H1 (cell line): ENCODE measurements at regions of chr4 and their contacts with region 1.

Region 1: DNA sequence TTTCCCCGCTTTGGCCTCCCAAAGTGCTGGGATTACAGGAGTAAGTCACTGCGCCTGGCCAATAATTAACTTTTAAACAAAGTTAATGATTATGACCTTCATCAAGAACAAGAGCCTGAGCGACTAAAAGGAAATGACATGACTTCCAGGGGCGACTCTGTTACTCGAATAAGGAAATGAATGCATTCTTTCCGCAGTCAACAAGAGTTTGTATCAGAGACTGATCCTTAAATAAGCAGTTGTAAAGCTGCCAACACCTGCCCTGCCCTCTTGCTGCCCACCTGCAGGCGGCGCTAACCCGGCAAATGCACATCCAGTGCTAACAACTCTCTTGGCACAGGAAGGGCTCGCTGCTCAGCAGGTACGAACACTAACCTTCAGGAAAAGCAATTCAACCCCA is 27.3 kb downstream of the WDR1 start:
- DNase-seq: peak in 1 of 2 experiments; percentile 19
- H3K4me3 ChIP-seq: no peak overlapping the region
- H3K27ac ChIP-seq: no peak overlapping the region
- H3K4me1 ChIP-seq: peaks cover 0 to 16% (median 9%) of the 10 kb centered on the region in 4 experiments; a peak in 5 of 7 replicates
- H3K27me3 ChIP-seq: no peaks in the 10 kb centered on the region
- CTCF ChIP-seq: peak in 2 of 3 experiments; percentile 60 to 82; a peak in 3 of 4 replicates
- EP300 ChIP-seq: no peak
- POLR2A ChIP-seq: no peak
- RAD21 ChIP-seq: peak in 1 of 2 experiments; percentile 53; a peak in 2 of 4 replicates

Region 2: DNA sequence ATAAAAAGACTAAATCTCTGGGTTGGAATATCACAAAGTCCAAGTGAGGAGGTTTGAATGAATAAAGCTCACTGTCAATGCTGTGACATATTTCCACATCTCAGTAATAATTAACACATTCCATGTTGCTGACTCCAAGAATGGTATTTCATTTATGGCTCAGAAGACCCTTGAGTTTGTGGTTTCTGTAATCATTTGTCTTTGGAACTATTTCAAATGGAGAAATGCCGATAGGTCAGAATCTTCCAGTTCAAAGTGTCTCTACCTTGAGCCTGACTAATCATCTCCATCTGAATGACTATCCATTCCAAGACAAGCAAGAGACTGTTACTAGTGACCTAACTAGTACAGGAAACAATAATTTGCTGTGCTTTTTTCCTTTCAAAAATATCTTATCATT is 43.9 kb before region 1 on chr4:
- CTCF ChIA-PET with region 1: no interaction called
- POLR2A ChIA-PET with region 1: no interaction called
- DNase-seq: no peak
- H3K4me3 ChIP-seq: no peak overlapping the region
- H3K27ac ChIP-seq: no peak overlapping the region
- H3K4me1 ChIP-seq: peaks cover 2 to 7% (median 5%) of the 10 kb centered on the region in 4 experiments; a peak in 5 of 7 replicates
- H3K27me3 ChIP-seq: no peaks in the 10 kb centered on the region
- CTCF ChIP-seq: no peak
- EP300 ChIP-seq: no peak
- POLR2A ChIP-seq: no peak
- RAD21 ChIP-seq: no peak

Region 3: GRCh38 chr4:10063544-10064300 is 25.6 kb before region 1 on chr4:
- CTCF ChIA-PET with region 1: interaction called, 12 read pairs
- POLR2A ChIA-PET with region 1: interaction called, 9 read pairs
- DNase-seq: peak; percentile 62 to 71
- H3K4me3 ChIP-seq: no peak overlapping the region
- H3K27ac ChIP-seq: no peak overlapping the region
- H3K4me1 ChIP-seq: peaks cover 0 to 10% (median 3%) of the 10 kb centered on the region in 4 experiments; a peak in 4 of 7 replicates
- H3K27me3 ChIP-seq: no peaks in the 10 kb centered on the region
- CTCF ChIP-seq: peak; percentile 52 to 87 (median 69)
- EP300 ChIP-seq: peak in 1 of 2 experiments; percentile 63; a peak in 1 of 3 replicates
- POLR2A ChIP-seq: no peak
- RAD21 ChIP-seq: peak; percentile 83 to 87

Region 4: GRCh38 chr4:10077483-10078335 is 11.6 kb before region 1 on chr4:
- CTCF ChIA-PET with region 1: interaction called, 16 read pairs
- POLR2A ChIA-PET with region 1: interaction called, 5 read pairs
- DNase-seq: no peak
- H3K4me3 ChIP-seq: no peak overlapping the region
- H3K27ac ChIP-seq: no peak overlapping the region
- H3K4me1 ChIP-seq: no peaks in the 10 kb centered on the region
- H3K27me3 ChIP-seq: no peaks in the 10 kb centered on the region
- CTCF ChIP-seq: no peak
- EP300 ChIP-seq: no peak
- POLR2A ChIP-seq: no peak
- RAD21 ChIP-seq: no peak

Region 5: DNA sequence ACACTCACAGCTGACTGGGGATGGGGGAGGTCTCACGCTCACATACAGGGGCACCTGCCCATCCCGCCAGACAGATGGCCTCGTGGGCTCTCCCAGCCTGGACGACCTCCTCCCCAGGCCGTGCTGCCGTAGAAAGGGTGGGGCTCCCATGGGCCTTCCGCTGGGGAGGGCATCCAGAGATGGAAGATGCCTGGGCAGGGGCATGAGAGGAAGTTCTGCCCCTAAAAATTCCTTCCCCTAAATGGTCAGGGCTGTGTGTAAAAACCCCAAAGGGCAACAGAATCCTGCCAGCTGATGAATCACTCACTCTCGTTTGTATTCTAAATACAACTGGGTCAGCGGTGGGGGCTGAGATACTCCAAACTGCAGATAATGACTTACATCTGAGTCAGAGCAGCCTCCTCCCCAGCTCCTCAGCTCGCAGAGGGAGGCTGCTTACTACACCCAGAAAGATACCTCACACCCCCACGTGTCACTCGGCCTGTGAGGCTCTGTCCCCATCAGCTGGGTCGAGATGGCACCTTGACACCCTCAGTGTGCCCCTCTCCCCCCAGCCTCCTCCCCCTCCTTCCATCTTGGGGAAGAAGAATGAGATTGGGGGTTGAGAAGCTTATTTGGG is 17.2 kb after region 1 on chr4:
- CTCF ChIA-PET with region 1: interaction called, 29 read pairs
- POLR2A ChIA-PET with region 1: interaction called, 197 read pairs
- DNase-seq: no peak
- H3K4me3 ChIP-seq: no peak overlapping the region
- H3K27ac ChIP-seq: no peak overlapping the region
- H3K4me1 ChIP-seq: peaks cover 0 to 54% (median 23%) of the 10 kb centered on the region in 4 experiments; a peak in 6 of 7 replicates
- H3K27me3 ChIP-seq: no peaks in the 10 kb centered on the region
- CTCF ChIP-seq: no peak
- EP300 ChIP-seq: no peak
- POLR2A ChIP-seq: peak in 1 of 2 experiments; percentile 40; a peak in 1 of 3 replicates
- RAD21 ChIP-seq: no peak

Region 6: GRCh38 chr4:10281996-10282395 is 192.7 kb after region 1 on chr4:
- CTCF ChIA-PET with region 1: no interaction called
- POLR2A ChIA-PET with region 1: no interaction called
- DNase-seq: no peak
- H3K4me3 ChIP-seq: no peak overlapping the region
- H3K27ac ChIP-seq: no peak overlapping the region
- H3K4me1 ChIP-seq: no peaks in the 10 kb centered on the region
- H3K27me3 ChIP-seq: no peaks in the 10 kb centered on the region
- CTCF ChIP-seq: no peak
- EP300 ChIP-seq: no peak
- POLR2A ChIP-seq: no peak
- RAD21 ChIP-seq: no peak